ENCODE measurements at regions of chrX and their contacts with region 1.

Region 1: DNA sequence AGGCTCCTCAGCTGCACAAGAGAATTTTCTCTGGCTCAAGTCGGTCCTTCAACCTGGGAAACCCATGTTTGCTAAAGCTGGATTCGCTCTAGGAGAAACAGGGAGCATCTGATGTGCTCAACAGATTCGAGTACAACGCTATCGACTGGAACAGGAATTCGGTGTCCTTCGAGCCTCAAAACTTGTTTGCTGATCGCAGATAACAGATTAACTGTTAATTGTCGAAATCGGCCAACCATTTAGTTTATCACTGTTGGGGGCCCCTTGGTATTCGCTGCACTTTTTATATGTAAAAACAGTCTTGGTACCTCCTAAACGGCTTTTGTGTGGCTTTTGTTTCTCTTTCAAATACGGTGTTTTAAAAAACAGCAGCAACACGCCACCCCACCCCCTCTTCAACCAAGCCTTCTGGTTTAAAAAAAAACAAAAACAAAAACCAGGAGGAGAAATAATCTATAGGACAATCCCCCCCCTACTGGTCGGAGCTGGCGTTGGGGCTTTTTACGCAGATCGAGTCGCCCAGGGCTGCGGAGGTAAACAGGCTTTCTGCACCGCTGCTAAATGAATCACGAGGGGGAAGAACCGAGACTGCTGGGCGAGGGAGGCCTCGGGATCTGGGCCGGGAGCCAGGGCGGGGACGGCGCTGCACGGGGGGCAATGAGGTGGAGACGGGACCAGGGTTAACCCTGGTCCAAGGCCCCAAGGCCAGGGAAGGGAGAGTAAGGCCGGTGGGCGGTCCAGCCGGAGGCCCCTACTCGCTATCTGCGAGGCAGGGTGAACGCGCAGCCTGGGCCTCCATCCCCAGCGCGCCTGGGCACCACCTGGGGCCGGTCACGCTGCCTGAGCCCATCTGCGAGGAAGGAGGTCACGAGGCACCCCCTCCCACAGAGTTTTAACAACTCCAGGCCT is 71.7 kb upstream of the BCOR start:
- DNase-seq: peak; percentile 80
- H3K4me3 ChIP-seq: no peak overlapping the region
- H3K27ac ChIP-seq: peak overlapping the region; percentile 93 to 99 (median 98)
- H3K4me1 ChIP-seq: peaks cover 10 to 52% (median 30%) of the 10 kb centered on the region in 4 donors
- H3K27me3 ChIP-seq: no peaks in the 10 kb centered on the region
- CTCF ChIP-seq: peak; percentile 18 to 61 (median 43)
- EP300 ChIP-seq: no peak
- POLR2A ChIP-seq: no peak

Region 2: DNA sequence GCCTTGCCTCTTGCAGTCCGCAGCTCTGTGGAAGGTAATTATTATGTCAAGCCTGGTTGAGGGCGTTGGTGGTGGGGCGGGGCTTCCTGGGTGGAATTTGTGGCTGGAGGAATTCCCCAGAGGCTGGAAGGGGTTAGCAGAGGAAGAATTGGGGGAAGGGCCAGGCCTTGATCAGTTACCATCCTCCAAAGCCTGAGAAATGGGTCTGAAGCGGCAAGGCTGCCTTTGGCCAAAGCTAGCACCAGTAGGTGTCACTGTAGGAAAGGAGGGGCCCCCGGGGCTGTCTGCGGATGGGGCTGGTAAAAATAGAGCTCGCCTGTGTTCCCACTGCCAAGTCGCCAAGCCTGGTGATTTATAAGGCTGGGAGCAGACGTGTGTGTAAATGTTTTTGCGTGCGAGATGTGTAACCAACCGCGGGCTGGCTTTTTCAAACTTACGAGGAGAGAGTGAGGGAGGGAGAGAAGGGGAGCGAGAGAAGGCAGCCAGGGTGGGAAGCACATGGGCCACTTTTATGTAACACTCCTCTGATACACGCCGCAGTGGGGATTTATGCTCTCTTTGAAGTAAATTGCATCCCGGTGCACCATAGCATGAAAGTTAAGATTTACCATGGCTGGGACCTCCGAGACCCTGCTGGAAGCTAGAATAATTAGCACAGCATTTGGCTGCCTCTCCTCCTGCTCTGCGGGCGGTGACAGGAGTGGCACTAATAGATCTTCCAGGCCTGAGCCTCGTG is 438.6 kb before region 1 on chrX:
- in situ Hi-C with region 1: loop called in 1 of 4 experiments (anchors 10 kb)
- intact Hi-C with region 1: no loop called
- DNase-seq: peak; percentile 67
- H3K4me3 ChIP-seq: no peak overlapping the region
- H3K27ac ChIP-seq: peak overlapping the region in 3 of 4 donors; percentile 41 to 59 (median 54)
- H3K4me1 ChIP-seq: peaks cover 0 to 24% (median 3%) of the 10 kb centered on the region in 4 donors
- H3K27me3 ChIP-seq: no peaks in the 10 kb centered on the region
- CTCF ChIP-seq: peak in 4 of 5 experiments; percentile 30 to 49 (median 46)
- EP300 ChIP-seq: no peak
- POLR2A ChIP-seq: no peak

Region 3: GRCh38 chrX:39874202-39874816 is 295.1 kb before region 1 on chrX:
- in situ Hi-C with region 1: no loop called
- intact Hi-C with region 1: no loop called
- DNase-seq: no peak
- H3K4me3 ChIP-seq: no peak overlapping the region
- H3K27ac ChIP-seq: no peak overlapping the region
- H3K4me1 ChIP-seq: no peaks in the 10 kb centered on the region
- H3K27me3 ChIP-seq: no peaks in the 10 kb centered on the region
- CTCF ChIP-seq: no peak
- EP300 ChIP-seq: no peak
- POLR2A ChIP-seq: no peak

Region 4: DNA sequence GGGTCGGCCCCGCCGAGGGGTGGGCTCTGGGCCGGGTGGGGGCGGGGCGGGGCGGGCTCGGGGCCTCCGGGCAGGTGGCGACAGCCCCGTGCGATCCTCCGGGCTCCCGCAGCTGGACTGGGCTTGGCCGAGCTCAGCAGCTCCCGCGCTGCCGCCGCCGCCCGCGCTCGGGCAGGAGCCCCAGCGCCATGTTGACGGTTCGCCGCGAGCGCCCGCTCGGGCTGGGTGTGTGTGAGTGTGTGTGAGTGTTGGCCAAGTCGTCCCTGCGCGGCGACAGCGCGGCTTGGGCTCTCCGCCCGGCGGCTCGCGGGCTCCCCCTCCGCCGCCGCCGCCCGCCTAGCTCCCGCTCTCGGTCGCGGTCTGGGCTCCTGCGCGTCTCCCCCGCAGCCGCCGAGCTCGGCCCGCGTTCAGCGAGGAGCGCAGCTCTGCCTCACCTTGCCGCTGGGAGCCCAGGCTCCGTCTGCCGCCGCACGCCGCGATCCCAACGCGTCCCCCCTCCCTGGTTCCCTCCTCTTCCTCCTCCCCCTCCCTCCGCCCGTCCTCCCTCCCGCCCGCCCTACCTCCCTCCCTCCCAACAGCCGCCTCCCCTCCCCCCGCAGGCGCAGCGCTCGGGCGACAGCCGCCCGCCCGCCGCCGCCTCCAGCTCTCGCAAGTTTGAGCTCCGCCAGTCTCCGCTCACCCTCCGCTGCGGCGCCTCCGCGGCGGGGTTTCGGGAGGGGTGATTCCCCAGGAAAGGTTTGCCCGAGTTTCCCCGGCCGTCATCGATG is 71.8 kb before region 1 on chrX and contains the start of gene BCOR:
- in situ Hi-C with region 1: no loop called
- intact Hi-C with region 1: loop called (anchors 5 kb)
- DNase-seq: peak; percentile 84
- H3K4me3 ChIP-seq: peak within 1 kb of the TSS; percentile 40 to 87 (median 77)
- H3K27ac ChIP-seq: peak within 1 kb of the TSS; percentile 91 to 95 (median 94)
- H3K4me1 ChIP-seq: peaks cover 2 to 25% (median 22%) of the 10 kb centered on the region in 4 donors
- H3K27me3 ChIP-seq: no peaks in the 10 kb centered on the region
- CTCF ChIP-seq: no peak
- EP300 ChIP-seq: no peak
- POLR2A ChIP-seq: peak; percentile 58
- total RNA-seq, gene BCOR: 17.9 to 27.8 (median 20.4) TPM

Measured in transverse colon (tissue), 4 donors.